ENCODE measurements at regions of chr6 and their contacts with region 1.

Region 1: GRCh38 chr6:36131511-36132245 is 1.4 kb downstream of the MAPK13 start:
- DNase-seq: peak in 11 of 14 experiments; percentile 25 to 76 (median 40)
- ATAC-seq: peak; percentile 73
- H3K4me3 ChIP-seq: peak overlapping the region; percentile 83
- H3K4me3 Mint-ChIP-seq: peak overlapping the region; percentile 93
- H3K27ac ChIP-seq: peak overlapping the region; percentile 82 to 88
- H3K27ac Mint-ChIP-seq: peak overlapping the region; percentile 95
- H3K4me1 ChIP-seq: peaks cover 51% of the 10 kb centered on the region
- H3K4me1 Mint-ChIP-seq: peaks cover 44% of the 10 kb centered on the region
- H3K27me3 ChIP-seq: no peaks in the 10 kb centered on the region
- H3K27me3 Mint-ChIP-seq: no peaks in the 10 kb centered on the region
- CTCF ChIP-seq: peak; percentile 9

Region 2: GRCh38 chr6:36099872-36100483 is 31.7 kb before region 1 on chr6:
- CTCF ChIA-PET with region 1: interaction called, 6 read pairs
- POLR2A ChIA-PET with region 1: interaction called, 28 read pairs
- intact Hi-C with region 1: loop called (anchors 2 to 5 kb)
- DNase-seq: peak in 7 of 14 experiments; percentile 35 to 84 (median 57)
- ATAC-seq: peak; percentile 90
- H3K4me3 ChIP-seq: no peak overlapping the region
- H3K4me3 Mint-ChIP-seq: peak overlapping the region; percentile 17
- H3K27ac ChIP-seq: peak overlapping the region; percentile 1 to 18
- H3K27ac Mint-ChIP-seq: peak overlapping the region; percentile 89
- H3K4me1 ChIP-seq: peaks cover 29% of the 10 kb centered on the region
- H3K4me1 Mint-ChIP-seq: peaks cover 64% of the 10 kb centered on the region
- H3K27me3 ChIP-seq: no peaks in the 10 kb centered on the region
- H3K27me3 Mint-ChIP-seq: no peaks in the 10 kb centered on the region
- CTCF ChIP-seq: no peak

Region 3: DNA sequence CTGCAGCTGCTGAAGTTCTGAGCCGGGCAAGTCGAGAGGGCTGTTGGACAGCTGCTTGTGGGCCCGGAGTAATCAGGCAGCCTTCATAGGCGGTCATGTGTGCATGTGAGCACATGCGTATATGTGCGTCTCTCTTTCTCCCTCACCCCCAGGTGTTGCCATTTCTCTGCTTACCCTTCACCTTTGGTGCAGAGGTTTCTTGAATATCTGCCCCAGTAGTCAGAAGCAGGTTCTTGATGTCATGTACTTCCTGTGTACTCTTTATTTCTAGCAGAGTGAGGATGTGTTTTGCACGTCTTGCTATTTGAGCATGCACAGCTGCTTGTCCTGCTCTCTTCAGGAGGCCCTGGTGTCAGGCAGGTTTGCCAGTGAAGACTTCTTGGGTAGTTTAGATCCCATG is 22.6 kb before region 1 on chr6:
- CTCF ChIA-PET with region 1: interaction called, 4 read pairs
- POLR2A ChIA-PET with region 1: interaction called, 23 read pairs
- intact Hi-C with region 1: no loop called
- DNase-seq: peak in 10 of 14 experiments; percentile 20 to 84 (median 47)
- ATAC-seq: peak; percentile 94
- H3K4me3 ChIP-seq: no peak overlapping the region
- H3K4me3 Mint-ChIP-seq: peak overlapping the region; percentile 0
- H3K27ac ChIP-seq: peak overlapping the region; percentile 56 to 58
- H3K27ac Mint-ChIP-seq: peak overlapping the region; percentile 93
- H3K4me1 ChIP-seq: peaks cover 34% of the 10 kb centered on the region
- H3K4me1 Mint-ChIP-seq: peaks cover 50% of the 10 kb centered on the region
- H3K27me3 ChIP-seq: no peaks in the 10 kb centered on the region
- H3K27me3 Mint-ChIP-seq: no peaks in the 10 kb centered on the region
- CTCF ChIP-seq: no peak

Region 4: DNA sequence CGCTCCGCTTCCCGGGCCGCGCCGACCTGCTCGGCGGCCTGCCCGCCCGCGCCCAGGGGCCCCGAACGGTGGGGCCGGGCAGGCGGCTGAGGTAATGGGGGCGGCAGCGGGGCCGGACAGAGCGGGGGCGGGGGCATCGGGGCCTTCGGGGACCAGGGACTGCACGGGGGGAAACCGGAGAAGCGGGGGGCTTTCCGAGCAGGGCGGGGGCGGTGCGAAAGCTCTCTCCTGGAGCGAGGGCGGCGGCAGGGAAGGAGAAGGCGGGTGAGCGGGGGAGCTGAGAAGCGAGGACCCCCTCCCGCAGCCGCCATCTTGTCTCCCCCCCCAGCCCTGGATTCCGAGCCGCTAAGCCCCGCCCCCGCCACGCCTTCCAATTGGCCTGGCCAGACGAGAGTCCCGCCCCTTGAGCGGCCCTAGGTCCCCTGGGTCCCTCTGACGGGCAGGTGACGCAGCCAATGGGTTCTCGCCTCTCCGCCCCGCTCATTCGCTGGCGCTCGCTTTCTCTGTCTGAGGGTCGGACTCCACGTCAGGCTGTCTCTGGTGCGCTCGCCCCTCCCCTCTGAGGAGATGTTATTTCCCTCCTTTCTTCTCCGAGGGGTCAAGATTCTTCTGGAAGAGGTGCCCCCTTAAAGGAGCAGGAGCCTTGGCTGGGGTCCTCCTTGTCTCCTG is 65.3 kb after region 1 on chr6:
- CTCF ChIA-PET with region 1: interaction called, 4 read pairs
- POLR2A ChIA-PET with region 1: interaction called, 19 read pairs
- intact Hi-C with region 1: loop called in 1 of 2 experiments (anchors 2 kb)
- DNase-seq: peak; percentile 99 to 100 (median 100)
- ATAC-seq: peak; percentile 87
- H3K4me3 ChIP-seq: peak overlapping the region; percentile 68
- H3K4me3 Mint-ChIP-seq: peak overlapping the region; percentile 96
- H3K27ac ChIP-seq: peak overlapping the region; percentile 65 to 79
- H3K27ac Mint-ChIP-seq: peak overlapping the region; percentile 96
- H3K4me1 ChIP-seq: peaks cover 48% of the 10 kb centered on the region
- H3K4me1 Mint-ChIP-seq: peaks cover 61% of the 10 kb centered on the region
- H3K27me3 ChIP-seq: no peaks in the 10 kb centered on the region
- H3K27me3 Mint-ChIP-seq: no peaks in the 10 kb centered on the region
- CTCF ChIP-seq: no peak